Breast epithelium (tissue), 4 donors: ENCODE measurements at regions of chr10 and their contacts with region 1.

Region 1: GRCh38 chr10:105023211-105024111 is 382.4 kb downstream of the SORCS3 start:
- DNase-seq: no peak
- H3K4me3 ChIP-seq: no peak overlapping the region
- H3K27ac ChIP-seq: no peak overlapping the region
- H3K4me1 ChIP-seq: no peaks in the 10 kb centered on the region
- H3K27me3 ChIP-seq: no peaks in the 10 kb centered on the region
- CTCF ChIP-seq: no peak
- POLR2A ChIP-seq: no peak

Region 2: DNA sequence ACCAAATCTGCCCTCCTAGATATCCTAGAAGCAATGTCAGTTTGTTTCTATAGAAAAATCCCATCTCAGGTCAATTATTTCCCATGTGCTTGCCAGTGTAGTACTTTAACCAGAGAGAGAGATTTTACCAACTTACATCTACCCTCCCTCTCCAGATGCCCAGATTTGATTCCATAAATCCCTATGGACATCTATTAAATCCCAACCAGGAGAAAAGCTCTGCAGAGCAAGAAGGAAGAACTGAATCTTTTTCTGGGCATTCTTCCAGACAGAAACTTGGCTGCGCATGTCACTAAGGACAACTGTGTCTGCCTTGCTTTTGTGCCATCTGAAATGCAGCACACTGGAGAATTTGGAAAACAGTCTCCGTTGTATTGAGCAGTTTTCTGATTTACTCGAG is 1543.4 kb after region 1 on chr10:
- intact Hi-C with region 1: loop called (anchors 10 kb)
- DNase-seq: no peak
- H3K4me3 ChIP-seq: no peak overlapping the region
- H3K27ac ChIP-seq: no peak overlapping the region
- H3K4me1 ChIP-seq: no peaks in the 10 kb centered on the region
- H3K27me3 ChIP-seq: no peaks in the 10 kb centered on the region
- CTCF ChIP-seq: no peak
- POLR2A ChIP-seq: no peak